ENCODE measurements at regions of chr10 and their contacts with region 1.

Region 1: GRCh38 chr10:12264204-12264940 is 68.4 kb downstream of the CDC123 start:
- DNase-seq: peak; percentile 72 to 86
- H3K4me3 ChIP-seq: peak overlapping the region; percentile 40 to 41
- H3K27ac ChIP-seq: peak overlapping the region in 1 of 2 donors; percentile 16
- H3K4me1 ChIP-seq: peaks cover 0 to 7% (median 2%) of the 10 kb centered on the region in 4 donors
- H3K27me3 ChIP-seq: no peaks in the 10 kb centered on the region
- CTCF ChIP-seq: peak; percentile 81 to 90

Region 2: DNA sequence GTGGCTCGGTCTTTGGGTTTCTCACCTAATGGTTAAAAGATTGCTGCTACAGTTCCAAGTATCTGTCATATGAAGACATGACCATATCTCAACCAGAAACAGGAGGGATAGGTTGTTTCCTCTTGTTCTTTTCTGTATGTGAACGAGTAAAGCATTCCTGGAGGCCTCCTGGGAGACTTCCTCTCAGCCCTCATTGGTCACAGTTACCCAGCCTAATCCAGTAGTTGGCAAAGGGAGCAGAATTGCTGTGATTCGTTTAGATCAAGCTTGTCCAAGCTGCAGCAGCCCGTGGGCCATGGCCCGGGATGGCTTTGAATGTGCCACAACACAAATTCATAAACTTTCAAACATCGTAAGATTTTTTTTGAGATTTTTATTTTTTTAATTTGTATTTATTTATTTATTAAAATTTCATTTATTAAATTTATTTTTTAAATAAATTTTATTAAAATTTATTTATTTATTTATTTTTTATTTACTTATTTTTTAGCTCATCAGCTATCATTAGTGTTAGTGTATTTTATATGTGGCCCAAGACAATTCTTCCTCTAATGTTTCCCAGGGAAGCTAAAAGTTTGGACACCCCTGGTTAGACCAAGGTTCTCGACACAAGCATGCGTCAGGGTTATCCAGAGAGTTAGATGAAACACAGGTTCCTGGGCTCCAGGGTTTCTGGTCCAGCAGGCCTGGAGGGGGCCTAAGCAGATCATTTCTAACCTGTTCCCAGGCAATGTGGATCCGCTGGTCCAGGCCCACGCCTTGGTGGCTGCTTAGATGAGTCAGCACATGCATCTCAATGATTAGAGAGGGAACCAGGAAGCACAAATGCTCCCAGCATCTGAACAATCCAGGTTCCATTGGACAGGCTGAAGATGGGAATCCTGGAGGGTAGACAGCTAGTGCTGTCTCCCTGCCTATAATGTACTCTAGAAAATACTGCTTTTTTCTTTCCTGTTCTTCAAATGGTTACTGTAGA is 42.8 kb before region 1 on chr10:
- intact Hi-C with region 1: no loop called
- DNase-seq: no peak
- H3K4me3 ChIP-seq: no peak overlapping the region
- H3K27ac ChIP-seq: peak overlapping the region; percentile 66 to 68
- H3K4me1 ChIP-seq: peaks cover 0 to 59% (median 34%) of the 10 kb centered on the region in 4 donors
- H3K27me3 ChIP-seq: no peaks in the 10 kb centered on the region
- CTCF ChIP-seq: no peak

Region 3: GRCh38 chr10:12656518-12657142 is 392.3 kb after region 1 on chr10:
- intact Hi-C with region 1: loop called (anchors 2 kb)
- DNase-seq: no peak
- H3K4me3 ChIP-seq: no peak overlapping the region
- H3K27ac ChIP-seq: no peak overlapping the region
- H3K4me1 ChIP-seq: no peaks in the 10 kb centered on the region
- H3K27me3 ChIP-seq: no peaks in the 10 kb centered on the region
- CTCF ChIP-seq: peak; percentile 59 to 73

Region 4: DNA sequence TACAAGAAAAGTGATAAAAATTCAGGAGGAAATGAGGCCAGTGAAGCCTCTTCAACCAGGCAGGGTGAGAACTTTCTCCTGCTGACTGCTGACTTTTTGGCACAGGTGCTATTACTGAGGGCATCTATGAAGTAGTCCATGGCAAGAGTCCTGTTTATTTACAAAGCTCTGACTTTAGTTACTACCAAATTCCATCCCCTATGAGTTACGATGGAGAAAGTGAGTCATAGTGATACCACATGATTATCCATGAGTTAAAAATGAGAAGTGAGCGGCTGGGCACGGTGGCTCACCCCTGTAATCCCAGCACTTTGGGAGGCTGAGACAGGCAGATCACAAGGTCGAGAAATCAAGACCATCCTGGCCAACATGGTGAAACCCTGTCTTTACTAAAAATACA is 717.2 kb after region 1 on chr10:
- intact Hi-C with region 1: no loop called
- DNase-seq: no peak
- H3K4me3 ChIP-seq: no peak overlapping the region
- H3K27ac ChIP-seq: peak overlapping the region in 1 of 2 donors; percentile 37
- H3K4me1 ChIP-seq: peaks cover 0 to 44% (median 16%) of the 10 kb centered on the region in 4 donors
- H3K27me3 ChIP-seq: no peaks in the 10 kb centered on the region
- CTCF ChIP-seq: no peak

Measured in tibial artery (tissue), 4 donors.